Activated CD8-positive, alpha-beta memory T cell treated with anti-CD3 and anti-CD28 coated beads, Interleukin-2, amount 10 ng/mL, durations not matched to agents 7 days and 5 days (primary cell): ENCODE measurements at regions of chr10 and their contacts with region 1.

Region 1: DNA sequence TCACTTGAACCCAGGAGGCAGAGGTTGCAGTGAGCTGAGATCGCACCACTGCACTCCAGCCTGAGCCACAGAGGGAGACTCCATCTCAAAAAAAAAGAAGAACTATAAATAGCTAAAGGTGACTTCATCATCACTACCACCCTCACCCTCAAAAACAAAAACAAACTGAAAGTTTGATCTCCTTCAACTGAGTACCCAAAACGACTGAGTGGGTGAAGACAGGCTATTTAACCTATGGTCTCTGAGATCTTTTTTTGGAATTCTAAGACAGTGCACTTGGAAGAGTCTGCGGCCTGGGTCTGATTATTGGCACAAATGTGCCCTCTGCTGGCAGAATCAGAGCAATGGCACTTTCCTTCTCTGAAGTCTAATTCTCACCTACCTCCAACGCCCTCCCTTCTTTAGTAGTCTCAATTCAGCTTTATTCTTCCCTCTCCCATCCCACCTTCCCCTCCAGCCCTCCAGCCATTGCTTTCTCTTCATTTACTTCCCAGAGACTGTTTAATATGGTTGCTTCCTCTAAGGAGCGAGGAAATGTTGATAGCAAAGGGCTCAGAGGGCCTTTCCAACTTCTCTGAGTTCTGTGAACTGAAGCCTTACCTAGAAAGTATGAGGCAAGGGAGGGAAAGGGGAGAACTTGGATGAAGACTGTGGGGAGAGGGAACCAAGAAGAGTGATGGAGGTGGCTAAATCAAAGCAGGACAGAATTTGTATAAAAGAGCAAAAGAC is 2.9 kb upstream of the MYOZ1 start:
- DNase-seq: peak; percentile 63
- ATAC-seq: peak; percentile 84
- H3K4me3 Mint-ChIP-seq: no peak overlapping the region
- H3K27ac Mint-ChIP-seq: peak overlapping the region; percentile 69
- H3K4me1 Mint-ChIP-seq: peaks cover 21% of the 10 kb centered on the region
- H3K27me3 Mint-ChIP-seq: no peaks in the 10 kb centered on the region

Region 2: GRCh38 chr10:73263948-73264347 is 380.2 kb before region 1 on chr10:
- CTCF ChIA-PET with region 1: interaction called, 14 read pairs
- DNase-seq: no peak
- ATAC-seq: peak; percentile 30
- H3K4me3 Mint-ChIP-seq: no peak overlapping the region
- H3K27ac Mint-ChIP-seq: no peak overlapping the region
- H3K4me1 Mint-ChIP-seq: peaks cover 3% of the 10 kb centered on the region
- H3K27me3 Mint-ChIP-seq: peaks cover 6% of the 10 kb centered on the region

Region 3: GRCh38 chr10:73501651-73502050 is 142.5 kb before region 1 on chr10:
- CTCF ChIA-PET with region 1: interaction called, 10 read pairs
- DNase-seq: no peak
- ATAC-seq: peak; percentile 27
- H3K4me3 Mint-ChIP-seq: no peak overlapping the region
- H3K27ac Mint-ChIP-seq: peak overlapping the region; percentile 72
- H3K4me1 Mint-ChIP-seq: peaks cover 20% of the 10 kb centered on the region
- H3K27me3 Mint-ChIP-seq: no peaks in the 10 kb centered on the region

Region 4: GRCh38 chr10:73517271-73517877 is 126.8 kb before region 1 on chr10:
- CTCF ChIA-PET with region 1: interaction called, 38 read pairs
- DNase-seq: no peak
- ATAC-seq: no peak
- H3K4me3 Mint-ChIP-seq: no peak overlapping the region
- H3K27ac Mint-ChIP-seq: no peak overlapping the region
- H3K4me1 Mint-ChIP-seq: no peaks in the 10 kb centered on the region
- H3K27me3 Mint-ChIP-seq: no peaks in the 10 kb centered on the region

Region 5: GRCh38 chr10:73529089-73529832 is 114.9 kb before region 1 on chr10:
- CTCF ChIA-PET with region 1: interaction called, 151 read pairs
- DNase-seq: peak; percentile 61
- ATAC-seq: peak; percentile 91
- H3K4me3 Mint-ChIP-seq: no peak overlapping the region
- H3K27ac Mint-ChIP-seq: no peak overlapping the region
- H3K4me1 Mint-ChIP-seq: no peaks in the 10 kb centered on the region
- H3K27me3 Mint-ChIP-seq: no peaks in the 10 kb centered on the region

Region 6: GRCh38 chr10:73625884-73626752 is 18.1 kb before region 1 on chr10:
- CTCF ChIA-PET with region 1: interaction called, 35 read pairs
- DNase-seq: peak; percentile 97
- ATAC-seq: peak; percentile 93
- H3K4me3 Mint-ChIP-seq: peak overlapping the region; percentile 98
- H3K27ac Mint-ChIP-seq: peak overlapping the region; percentile 96
- H3K4me1 Mint-ChIP-seq: peaks cover 27% of the 10 kb centered on the region
- H3K27me3 Mint-ChIP-seq: no peaks in the 10 kb centered on the region

Region 7: DNA sequence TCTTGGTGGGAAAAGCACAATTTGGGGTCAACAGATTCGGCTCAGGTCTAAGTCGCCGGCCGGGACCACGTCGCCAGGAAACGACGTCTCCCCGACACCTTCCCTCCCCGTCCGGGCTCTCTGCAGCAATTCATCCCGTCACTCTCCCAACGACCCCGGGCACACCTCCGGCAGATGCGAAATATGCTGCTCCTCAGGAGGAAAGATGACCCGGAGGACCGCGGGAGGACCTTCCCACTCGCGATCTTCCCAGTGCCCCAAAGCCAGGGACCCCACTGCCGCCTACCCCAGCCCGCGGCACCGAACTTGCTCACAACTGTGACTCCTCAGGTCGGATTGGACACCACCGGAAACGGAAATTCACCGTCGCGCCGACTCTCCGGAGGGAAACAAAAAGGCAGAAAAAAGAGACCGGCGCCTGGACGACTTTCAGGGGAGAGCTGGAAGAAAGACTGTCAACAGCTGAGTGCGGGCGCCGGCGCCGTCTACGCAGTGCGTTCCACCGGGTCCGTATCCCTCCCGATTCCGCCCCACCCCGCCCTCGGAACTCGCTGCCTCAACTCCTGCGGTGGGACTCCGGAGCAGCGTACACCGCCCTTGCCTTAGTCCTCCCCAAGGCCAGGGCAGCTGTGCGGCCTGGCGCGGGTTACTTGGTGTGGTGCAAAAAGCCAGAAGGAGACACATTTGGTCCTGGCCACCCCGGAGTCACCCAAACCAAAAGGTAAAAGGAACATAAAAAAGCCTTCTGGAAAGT is 86.2 kb after region 1 on chr10:
- CTCF ChIA-PET with region 1: no interaction called
- DNase-seq: peak; percentile 95
- ATAC-seq: peak; percentile 95
- H3K4me3 Mint-ChIP-seq: peak overlapping the region; percentile 98
- H3K27ac Mint-ChIP-seq: peak overlapping the region; percentile 96
- H3K4me1 Mint-ChIP-seq: peaks cover 15% of the 10 kb centered on the region
- H3K27me3 Mint-ChIP-seq: no peaks in the 10 kb centered on the region